ENCODE measurements at regions of chr1 and their contacts with region 1.

Region 1: GRCh38 chr1:157490467-157491165 is 61.7 kb downstream of the FCRL5 start:
- DNase-seq: no peak
- H3K4me3 ChIP-seq: no peak overlapping the region
- H3K27ac ChIP-seq: no peak overlapping the region
- H3K4me1 ChIP-seq: no peaks in the 10 kb centered on the region
- H3K27me3 ChIP-seq: no peaks in the 10 kb centered on the region
- CTCF ChIP-seq: peak in 1 of 3 experiments; percentile 43
- POLR2A ChIP-seq: no peak

Region 2: DNA sequence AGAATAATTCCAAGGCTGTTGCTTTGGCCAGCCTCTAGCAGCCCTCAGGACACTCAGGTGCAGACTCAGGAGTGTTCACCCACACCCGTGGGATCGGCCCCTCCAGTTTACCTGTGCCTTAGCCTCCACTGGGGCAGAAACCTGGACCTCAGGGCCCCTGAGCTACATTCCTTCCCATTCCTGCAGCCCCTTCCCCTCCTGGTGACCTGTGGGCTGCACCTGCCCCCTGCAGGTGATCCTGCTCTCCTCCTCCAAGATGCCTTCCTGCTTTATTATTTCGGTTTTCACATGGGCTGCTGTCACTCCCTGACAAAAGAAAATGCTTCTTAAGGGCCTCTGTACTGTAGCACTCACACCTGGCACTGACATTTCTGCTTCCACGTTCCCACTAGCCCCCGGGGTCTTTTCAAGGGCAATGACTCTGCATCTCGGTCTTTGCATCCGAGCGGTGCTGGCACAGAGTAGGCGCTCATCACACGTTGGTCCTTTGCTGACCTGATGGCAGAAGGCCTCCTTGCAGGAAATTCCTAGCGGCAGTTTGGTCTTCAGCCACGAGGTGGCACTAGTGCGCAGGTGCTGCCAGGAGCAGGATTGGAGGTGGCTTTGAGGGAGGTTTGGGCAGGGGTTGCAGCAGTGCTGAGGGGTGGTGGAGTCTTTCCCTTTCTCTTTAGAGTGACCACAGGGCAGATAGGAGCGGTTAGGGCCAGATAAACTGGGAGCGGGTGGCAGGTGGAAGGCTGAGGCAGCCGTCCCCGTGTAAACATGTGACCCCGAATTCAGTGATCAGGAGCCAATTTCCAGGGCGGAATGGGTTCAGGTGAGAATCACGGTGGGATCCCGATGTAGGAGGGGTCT is 327.1 kb before region 1 on chr1:
- intact Hi-C with region 1: loop called (anchors 10 kb)
- DNase-seq: no peak
- H3K4me3 ChIP-seq: no peak overlapping the region
- H3K27ac ChIP-seq: no peak overlapping the region
- H3K4me1 ChIP-seq: no peaks in the 10 kb centered on the region
- H3K27me3 ChIP-seq: no peaks in the 10 kb centered on the region
- CTCF ChIP-seq: peak; percentile 21 to 76 (median 54)
- POLR2A ChIP-seq: no peak

Region 3: DNA sequence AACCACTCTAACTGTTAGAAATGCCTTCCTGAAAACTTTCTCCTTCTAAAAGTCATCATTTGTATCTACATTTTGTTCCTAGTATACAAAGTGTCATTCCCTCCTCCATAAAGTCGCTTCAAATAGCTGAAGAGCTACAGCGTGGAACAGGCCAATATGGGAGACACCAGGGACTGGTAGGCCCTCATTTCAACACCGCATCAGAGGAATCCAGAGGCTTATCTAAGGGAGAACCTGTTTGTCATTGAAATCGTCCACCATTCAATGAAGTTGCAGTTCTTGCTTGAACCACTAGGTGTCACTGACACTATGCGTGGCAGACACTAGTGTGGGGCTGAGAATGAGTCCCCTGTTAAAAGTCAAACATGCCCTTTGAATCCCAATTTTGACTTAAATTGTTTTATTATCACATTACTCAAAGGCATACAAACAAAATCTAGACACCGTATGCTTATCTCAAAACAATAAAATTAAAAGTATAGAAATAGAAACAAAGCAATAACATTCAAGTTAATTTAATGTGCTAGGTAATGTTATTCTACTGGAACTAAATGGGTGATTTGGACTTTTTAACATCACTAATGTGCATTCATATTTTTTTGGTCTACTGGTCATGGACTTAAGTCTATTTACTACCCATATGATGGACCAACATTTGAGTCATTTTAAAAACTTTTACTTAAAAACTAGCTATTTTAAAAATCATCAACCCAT is 120.7 kb before region 1 on chr1:
- intact Hi-C with region 1: loop called (anchors 10 kb)
- DNase-seq: no peak
- H3K4me3 ChIP-seq: no peak overlapping the region
- H3K27ac ChIP-seq: no peak overlapping the region
- H3K4me1 ChIP-seq: no peaks in the 10 kb centered on the region
- H3K27me3 ChIP-seq: no peaks in the 10 kb centered on the region
- CTCF ChIP-seq: peak; percentile 46 to 72 (median 67)
- POLR2A ChIP-seq: no peak

Region 4: DNA sequence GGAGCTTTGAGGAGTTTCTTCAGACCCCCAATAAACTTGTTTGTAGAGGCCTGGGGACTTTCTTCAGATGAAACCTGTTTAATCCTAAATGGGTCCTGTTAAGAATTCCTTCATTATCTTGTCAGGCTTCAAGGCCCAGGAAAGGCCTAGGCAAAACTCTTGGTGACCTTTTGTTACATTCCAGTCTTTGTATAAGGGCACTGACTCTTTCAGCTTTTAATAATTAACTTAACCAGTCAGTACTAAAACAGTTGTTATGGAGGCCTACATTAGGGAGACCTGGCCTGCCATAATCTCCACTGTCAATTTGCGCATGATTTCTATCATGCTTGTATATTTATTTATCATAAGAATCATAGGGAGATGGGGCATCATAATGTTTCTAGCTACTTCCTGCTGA is 48.6 kb before region 1 on chr1:
- intact Hi-C with region 1: no loop called
- DNase-seq: no peak
- H3K4me3 ChIP-seq: no peak overlapping the region
- H3K27ac ChIP-seq: no peak overlapping the region
- H3K4me1 ChIP-seq: no peaks in the 10 kb centered on the region
- H3K27me3 ChIP-seq: no peaks in the 10 kb centered on the region
- CTCF ChIP-seq: no peak
- POLR2A ChIP-seq: no peak

Region 5: DNA sequence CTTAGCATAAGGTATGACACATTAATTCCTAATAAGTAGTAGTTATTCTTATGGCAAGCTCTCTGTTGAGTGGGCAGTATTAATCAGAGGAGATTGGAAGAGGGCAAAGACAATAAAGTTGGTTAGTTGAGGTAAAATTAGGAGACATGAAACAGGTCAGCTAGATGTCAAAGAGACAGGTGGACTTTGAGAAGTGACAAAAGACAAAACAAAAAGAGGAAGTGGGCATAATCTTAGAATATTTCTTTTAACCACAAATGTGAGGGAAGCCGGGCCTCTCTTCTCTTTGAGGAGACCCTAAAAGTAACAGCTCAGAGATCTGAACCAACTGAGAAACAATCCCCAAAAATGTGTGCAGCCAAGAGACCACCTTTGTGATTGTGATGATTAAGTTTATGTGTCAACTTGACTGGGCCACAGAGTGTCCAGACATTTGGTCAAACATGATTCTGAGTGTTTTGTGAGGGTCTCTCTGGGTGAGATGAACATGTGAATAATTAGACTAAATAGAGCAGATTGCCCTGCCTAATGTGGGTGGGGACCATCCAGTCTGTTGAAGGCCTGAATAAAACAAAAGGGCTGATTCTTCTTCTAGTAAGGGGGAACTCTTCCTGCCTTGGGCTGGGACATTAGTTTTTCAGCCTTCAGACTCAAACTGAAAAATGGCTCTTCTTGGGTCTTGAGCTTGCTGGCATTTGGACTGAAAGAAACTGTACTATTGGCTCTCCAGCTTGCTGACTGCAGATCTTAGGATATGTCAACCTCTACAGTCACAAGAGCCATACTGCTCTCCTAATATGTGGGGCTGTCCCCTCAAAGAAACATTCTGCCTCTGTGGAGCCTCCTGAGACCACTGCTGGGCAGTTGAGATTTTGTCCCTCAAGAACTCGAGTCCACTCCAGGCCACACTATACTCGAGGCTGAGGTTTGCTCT is 21.7 kb after region 1 on chr1:
- intact Hi-C with region 1: no loop called
- DNase-seq: no peak
- H3K4me3 ChIP-seq: no peak overlapping the region
- H3K27ac ChIP-seq: no peak overlapping the region
- H3K4me1 ChIP-seq: no peaks in the 10 kb centered on the region
- H3K27me3 ChIP-seq: no peaks in the 10 kb centered on the region
- CTCF ChIP-seq: no peak
- POLR2A ChIP-seq: no peak